PC-9 (cell line): ENCODE measurements at regions of chr2 and their contacts with region 1.

Region 1: GRCh38 chr2:168346725-168347477 is 99.5 kb upstream of the STK39 start:
- DNase-seq: peak in 1 of 2 experiments; percentile 43
- H3K4me3 ChIP-seq: peak overlapping the region; percentile 51; the same call in 1 of the 2 replicates
- H3K27ac ChIP-seq: no peak overlapping the region
- H3K4me1 ChIP-seq: no peaks in the 10 kb centered on the region
- H3K27me3 ChIP-seq: no peaks in the 10 kb centered on the region
- CTCF ChIP-seq: peak; percentile 81

Region 2: GRCh38 chr2:168244318-168244717 is 102.6 kb before region 1 on chr2:
- CTCF ChIA-PET with region 1: no interaction called
- POLR2A ChIA-PET with region 1: no interaction called
- intact Hi-C with region 1: no loop called
- DNase-seq: no peak
- H3K4me3 ChIP-seq: peak overlapping the region; percentile 90; the same call in 1 of the 2 replicates
- H3K27ac ChIP-seq: no peak overlapping the region
- H3K4me1 ChIP-seq: peaks cover 39% of the 10 kb centered on the region
- H3K27me3 ChIP-seq: no peaks in the 10 kb centered on the region
- CTCF ChIP-seq: no peak

Region 3: DNA sequence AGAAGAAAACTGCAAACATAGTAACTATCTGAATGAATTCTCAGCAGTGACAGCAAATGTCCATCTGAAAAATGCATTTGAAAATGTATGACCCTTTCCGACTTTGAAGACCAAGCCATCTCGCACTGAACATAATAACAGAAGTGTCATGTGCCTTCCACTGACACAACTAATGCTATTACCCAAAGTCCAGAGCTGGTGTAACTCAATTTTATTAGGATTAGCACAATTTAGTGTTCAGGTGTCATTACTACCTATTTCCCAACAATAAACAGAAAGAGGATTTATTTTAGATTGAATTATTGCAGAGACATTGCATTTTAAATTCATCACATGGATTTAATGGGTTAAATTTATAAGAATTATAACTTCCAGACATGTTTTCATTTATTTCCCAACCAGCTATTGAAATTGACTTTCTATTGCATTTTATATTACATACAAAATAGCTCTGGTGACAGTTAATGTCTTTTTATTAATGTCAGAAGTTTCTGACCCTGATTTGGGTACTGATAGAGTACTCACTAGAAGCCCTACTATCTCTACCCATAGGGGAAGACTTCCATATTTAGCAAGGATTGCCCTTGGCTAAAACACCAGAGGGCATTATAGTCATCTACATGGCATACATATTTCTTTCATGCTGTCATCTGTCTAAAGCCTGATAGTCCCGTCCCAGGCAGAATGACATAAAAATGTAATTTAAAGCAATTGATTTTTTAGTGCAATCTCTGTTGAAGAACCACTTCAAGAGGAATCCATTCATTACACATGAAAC is 92.6 kb before region 1 on chr2:
- CTCF ChIA-PET with region 1: no interaction called
- POLR2A ChIA-PET with region 1: no interaction called
- intact Hi-C with region 1: no loop called
- DNase-seq: peak; percentile 3 to 76
- H3K4me3 ChIP-seq: no peak overlapping the region
- H3K27ac ChIP-seq: 0 out of 2 replicates have a peak overlapping the region, but pooled peaks have one; percentile 6
- H3K4me1 ChIP-seq: peaks cover 13% of the 10 kb centered on the region
- H3K27me3 ChIP-seq: no peaks in the 10 kb centered on the region
- CTCF ChIP-seq: no peak

Region 4: GRCh38 chr2:168601741-168602140 is 254.8 kb after region 1 on chr2:
- CTCF ChIA-PET with region 1: no interaction called
- POLR2A ChIA-PET with region 1: no interaction called
- intact Hi-C with region 1: no loop called
- DNase-seq: no peak
- H3K4me3 ChIP-seq: no peak overlapping the region
- H3K27ac ChIP-seq: no peak overlapping the region
- H3K4me1 ChIP-seq: no peaks in the 10 kb centered on the region
- H3K27me3 ChIP-seq: no peaks in the 10 kb centered on the region
- CTCF ChIP-seq: no peak

Region 5: GRCh38 chr2:168687314-168687713 is 340.4 kb after region 1 on chr2:
- CTCF ChIA-PET with region 1: no interaction called
- POLR2A ChIA-PET with region 1: no interaction called
- intact Hi-C with region 1: loop called (anchors 2 kb)
- DNase-seq: no peak
- H3K4me3 ChIP-seq: no peak overlapping the region
- H3K27ac ChIP-seq: no peak overlapping the region
- H3K4me1 ChIP-seq: no peaks in the 10 kb centered on the region
- H3K27me3 ChIP-seq: no peaks in the 10 kb centered on the region
- CTCF ChIP-seq: peak; percentile 35; the same call in 1 of the 2 replicates

Region 6: DNA sequence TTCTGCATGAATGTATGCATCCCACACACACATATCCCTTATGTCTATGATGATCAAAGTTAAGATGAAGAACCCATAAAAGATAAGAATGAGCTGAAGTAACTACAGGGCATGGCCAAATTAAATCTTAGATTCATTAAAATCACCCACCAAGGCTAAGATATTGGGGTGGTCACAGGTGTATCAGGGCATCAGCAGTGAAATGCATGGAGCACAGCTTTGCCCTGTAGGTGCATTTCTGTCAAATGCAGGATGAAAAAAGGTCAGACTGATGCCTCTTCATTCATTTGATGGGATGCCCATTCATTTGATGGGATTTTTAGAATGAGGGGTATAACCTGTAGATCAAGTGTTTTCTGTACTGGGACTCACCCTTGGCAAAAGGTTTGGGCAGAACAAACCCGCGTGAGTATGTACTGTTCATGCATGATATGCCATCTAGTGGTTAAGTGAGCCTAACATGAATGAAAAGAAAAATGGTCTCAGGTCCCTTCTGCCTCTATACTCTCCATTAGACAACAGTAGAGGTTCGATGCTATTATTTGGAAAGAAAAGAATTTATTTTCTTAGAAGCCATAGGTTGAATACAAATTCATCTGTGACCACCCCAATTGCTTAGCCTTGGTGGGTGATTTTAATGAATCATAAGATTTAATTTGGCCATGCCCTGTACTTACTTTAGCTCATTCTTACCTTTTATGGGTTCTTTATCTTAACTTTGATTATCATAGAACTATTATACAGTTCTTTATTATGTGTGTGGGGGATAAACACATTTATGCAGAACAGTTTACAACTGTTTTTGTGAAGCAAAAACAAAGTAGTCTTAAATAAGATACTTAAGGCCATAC is 412.3 kb after region 1 on chr2:
- CTCF ChIA-PET with region 1: no interaction called
- POLR2A ChIA-PET with region 1: no interaction called
- intact Hi-C with region 1: loop called (anchors 1 kb)
- DNase-seq: no peak
- H3K4me3 ChIP-seq: no peak overlapping the region
- H3K27ac ChIP-seq: no peak overlapping the region
- H3K4me1 ChIP-seq: no peaks in the 10 kb centered on the region
- H3K27me3 ChIP-seq: no peaks in the 10 kb centered on the region
- CTCF ChIP-seq: peak; percentile 51

Region 7: GRCh38 chr2:168773719-168774521 is 427.0 kb after region 1 on chr2:
- CTCF ChIA-PET with region 1: no interaction called
- POLR2A ChIA-PET with region 1: no interaction called
- intact Hi-C with region 1: loop called (anchors 5 kb)
- DNase-seq: peak in 1 of 2 experiments; percentile 15
- H3K4me3 ChIP-seq: no peak overlapping the region
- H3K27ac ChIP-seq: no peak overlapping the region
- H3K4me1 ChIP-seq: no peaks in the 10 kb centered on the region
- H3K27me3 ChIP-seq: no peaks in the 10 kb centered on the region
- CTCF ChIP-seq: peak; percentile 75

Region 8: GRCh38 chr2:168920504-168921157 is 573.7 kb after region 1 on chr2:
- CTCF ChIA-PET with region 1: interaction called, 3 read pairs
- POLR2A ChIA-PET with region 1: no interaction called
- intact Hi-C with region 1: loop called (anchors 1 kb)
- DNase-seq: no peak
- H3K4me3 ChIP-seq: no peak overlapping the region
- H3K27ac ChIP-seq: no peak overlapping the region
- H3K4me1 ChIP-seq: no peaks in the 10 kb centered on the region
- H3K27me3 ChIP-seq: no peaks in the 10 kb centered on the region
- CTCF ChIP-seq: peak; percentile 73